OCI-LY7 (cell line): ENCODE measurements at regions of chr13 and their contacts with region 1.

Region 1: GRCh38 chr13:24203811-24204210 is 43.3 kb downstream of the SPATA13 start:
- DNase-seq: peak; percentile 73
- H3K4me3 ChIP-seq: peak overlapping the region; percentile 54
- H3K27ac ChIP-seq: peak overlapping the region; percentile 65
- H3K4me1 ChIP-seq: peaks cover 31% of the 10 kb centered on the region
- CTCF ChIP-seq: no peak

Region 2: DNA sequence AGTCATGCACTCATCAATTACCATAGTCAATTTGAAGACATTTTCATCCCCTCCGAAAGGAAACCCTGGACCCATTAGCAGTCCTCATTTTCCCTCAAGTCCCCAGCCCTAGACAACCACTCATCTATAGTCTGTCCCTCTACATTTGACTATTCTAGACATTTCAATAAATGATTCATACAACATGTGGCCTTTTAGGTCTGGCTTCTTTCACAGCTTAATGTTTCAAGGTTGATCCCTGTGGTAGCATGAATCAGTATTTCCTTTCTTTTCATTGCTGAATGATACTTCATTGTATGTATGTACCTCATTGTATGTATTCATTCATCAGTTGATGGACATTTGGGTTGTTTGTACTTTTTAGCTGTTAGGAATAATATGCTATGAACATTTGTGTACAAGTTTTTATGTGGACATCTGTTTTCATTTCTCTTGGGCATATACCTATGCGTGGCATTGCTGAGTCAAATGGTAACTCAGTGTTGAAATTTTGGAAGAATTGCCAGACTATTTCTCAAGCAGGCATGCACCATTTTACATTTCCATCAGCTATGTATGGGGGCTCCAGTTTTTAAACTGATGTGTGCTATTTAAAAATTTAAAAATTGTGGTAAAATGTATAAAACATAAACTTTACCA is 24.8 kb before region 1 on chr13:
- CTCF ChIA-PET with region 1: no interaction called
- POLR2A ChIA-PET with region 1: interaction called, 15 read pairs
- intact Hi-C with region 1: no loop called
- DNase-seq: no peak
- H3K4me3 ChIP-seq: no peak overlapping the region
- H3K27ac ChIP-seq: no peak overlapping the region
- H3K4me1 ChIP-seq: peaks cover 3% of the 10 kb centered on the region
- CTCF ChIP-seq: no peak

Region 3: DNA sequence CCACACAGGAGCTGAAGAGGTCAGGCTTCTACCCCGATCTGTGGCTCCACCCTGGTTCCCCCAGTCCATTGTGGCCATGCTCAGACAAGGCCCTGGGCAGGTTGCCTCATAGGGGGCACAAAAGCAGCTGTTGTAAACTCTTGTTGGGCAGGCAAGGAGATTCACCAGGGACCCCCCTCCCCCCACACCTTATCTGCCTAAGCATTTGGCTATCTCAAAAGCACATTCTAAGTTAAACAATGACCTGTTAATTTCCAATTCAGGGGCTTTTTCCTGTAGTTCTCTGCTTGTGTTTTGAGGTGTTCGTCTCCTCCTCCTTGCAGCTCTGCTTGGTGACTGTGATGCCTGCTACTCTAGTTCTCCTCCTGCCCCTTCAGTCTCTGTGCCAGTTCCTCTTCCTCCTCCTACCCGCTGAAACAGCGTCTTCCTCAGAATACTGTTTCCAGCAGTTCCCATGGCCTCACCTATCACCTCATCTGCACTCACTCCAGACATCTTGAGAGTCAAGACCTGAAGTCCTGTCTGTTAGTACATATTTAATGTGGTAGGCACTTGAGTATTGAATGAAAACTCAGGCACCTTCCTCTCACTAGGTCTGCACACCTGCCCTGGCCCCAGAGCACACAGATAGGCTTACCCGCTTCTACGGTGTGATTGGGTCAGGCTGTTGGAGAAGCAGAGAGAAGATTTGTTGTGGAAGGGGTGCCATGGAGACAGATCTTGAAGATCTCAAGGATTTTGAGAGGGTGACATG is 11.6 kb before region 1 on chr13:
- CTCF ChIA-PET with region 1: no interaction called
- POLR2A ChIA-PET with region 1: interaction called, 19 read pairs
- intact Hi-C with region 1: no loop called
- DNase-seq: no peak
- H3K4me3 ChIP-seq: no peak overlapping the region
- H3K27ac ChIP-seq: no peak overlapping the region
- H3K4me1 ChIP-seq: peaks cover 8% of the 10 kb centered on the region
- CTCF ChIP-seq: no peak

Region 4: DNA sequence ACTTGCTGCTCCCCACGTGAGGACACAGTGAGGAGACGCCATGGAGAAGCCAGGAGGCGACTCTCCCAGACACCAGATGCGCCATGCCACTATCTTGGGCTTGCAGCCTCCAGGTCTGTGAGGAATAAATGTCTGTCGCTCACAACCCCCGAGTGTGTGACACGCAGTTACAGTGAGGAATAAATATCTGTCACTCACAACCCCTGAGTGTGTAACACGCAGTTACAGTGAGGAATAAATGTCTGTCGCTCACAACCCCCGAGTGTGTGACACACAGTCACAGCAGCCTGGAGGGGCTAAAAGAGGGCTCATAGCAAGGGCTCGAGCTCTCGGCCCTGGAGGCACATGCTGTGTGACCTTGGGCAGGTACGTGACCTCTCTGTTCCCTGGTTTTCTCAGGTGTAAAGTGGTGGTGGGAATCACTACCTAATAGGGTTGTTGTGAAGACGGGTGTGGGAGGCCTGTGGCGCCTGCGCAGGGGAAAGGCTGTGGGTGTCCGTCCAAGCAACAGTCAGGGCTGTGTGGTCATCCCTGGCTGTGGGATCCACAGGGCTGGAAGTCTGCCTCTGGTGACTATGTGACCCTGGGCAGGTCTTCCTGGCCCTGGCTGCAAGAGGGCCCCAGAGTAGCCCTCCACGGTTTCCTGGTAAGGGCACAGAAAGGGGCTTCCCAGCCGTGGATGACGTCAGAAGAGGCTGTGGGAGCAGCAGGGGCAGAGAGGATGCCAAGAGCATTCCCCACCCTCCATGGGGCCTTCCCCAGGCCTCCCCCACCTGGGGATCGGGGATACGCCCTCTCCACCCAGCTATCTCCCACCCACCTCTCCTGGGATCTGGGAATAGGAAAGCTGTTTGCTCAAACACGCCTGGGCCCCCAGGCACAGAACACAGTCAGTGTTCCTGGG is 183.3 kb after region 1 on chr13:
- CTCF ChIA-PET with region 1: no interaction called
- POLR2A ChIA-PET with region 1: no interaction called
- intact Hi-C with region 1: no loop called
- DNase-seq: no peak
- H3K4me3 ChIP-seq: no peak overlapping the region
- H3K27ac ChIP-seq: no peak overlapping the region
- H3K4me1 ChIP-seq: no peaks in the 10 kb centered on the region
- CTCF ChIP-seq: no peak

Region 5: GRCh38 chr13:26007261-26008125 is 1803.7 kb after region 1 on chr13:
- CTCF ChIA-PET with region 1: no interaction called
- POLR2A ChIA-PET with region 1: no interaction called
- intact Hi-C with region 1: no loop called
- DNase-seq: no peak
- H3K4me3 ChIP-seq: no peak overlapping the region
- H3K27ac ChIP-seq: no peak overlapping the region
- H3K4me1 ChIP-seq: no peaks in the 10 kb centered on the region
- CTCF ChIP-seq: no peak